H1 (cell line): ENCODE measurements at regions of chr20 and their contacts with region 1.

Region 1: GRCh38 chr20:22691369-22692118 is 107.2 kb upstream of the FOXA2 start:
- DNase-seq: peak; percentile 58 to 84
- H3K4me3 ChIP-seq: no peak overlapping the region
- H3K27ac ChIP-seq: no peak overlapping the region
- H3K4me1 ChIP-seq: peaks cover 0 to 2% (median 0%) of the 10 kb centered on the region in 4 experiments; a peak in 1 of 7 replicates
- H3K27me3 ChIP-seq: no peaks in the 10 kb centered on the region; a peak in 2 of 7 replicates
- CTCF ChIP-seq: peak; percentile 77 to 90 (median 89)
- EP300 ChIP-seq: no peak
- POLR2A ChIP-seq: no peak
- RAD21 ChIP-seq: peak; percentile 92 to 96

Region 2: DNA sequence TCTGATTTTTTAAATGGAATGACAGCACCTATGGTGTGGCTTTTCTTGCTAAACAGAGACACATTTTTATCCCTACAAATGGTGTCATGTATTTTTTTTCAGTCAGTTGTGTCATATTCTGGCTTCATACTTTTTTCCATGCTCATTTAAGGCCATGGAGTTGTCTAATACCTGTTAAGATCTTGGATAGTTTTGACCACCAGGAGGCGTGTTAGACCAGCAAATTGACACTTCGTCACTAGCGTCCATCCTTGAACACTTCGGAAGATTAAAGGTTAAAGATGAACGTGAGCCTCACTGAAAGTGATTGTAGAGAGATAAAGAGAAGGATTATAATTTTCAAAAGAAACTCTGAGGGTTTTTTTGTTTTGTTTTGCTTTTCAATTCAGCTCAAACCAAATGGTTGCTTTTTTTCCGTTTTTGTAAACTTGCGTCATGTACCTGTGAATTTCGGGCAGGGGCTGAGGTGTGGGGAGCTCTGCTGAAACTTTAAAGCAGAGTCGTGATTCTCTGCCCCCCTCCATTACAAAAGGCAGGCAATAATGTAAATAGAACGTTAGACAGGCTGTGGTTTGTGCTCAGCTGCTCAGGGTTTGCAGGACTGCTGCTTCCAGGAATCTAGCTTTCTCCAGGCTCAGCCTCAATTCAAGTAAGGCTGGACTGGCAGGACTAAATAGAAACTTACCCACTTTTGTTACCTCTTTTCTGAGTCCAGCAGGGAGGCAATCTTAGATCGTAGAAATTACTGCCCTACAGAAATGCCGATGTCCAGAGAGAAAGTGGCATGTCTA is 352.3 kb before region 1 on chr20:
- CTCF ChIA-PET with region 1: interaction called, 140 read pairs
- POLR2A ChIA-PET with region 1: no interaction called
- DNase-seq: peak; percentile 17 to 57
- H3K4me3 ChIP-seq: no peak overlapping the region
- H3K27ac ChIP-seq: no peak overlapping the region
- H3K4me1 ChIP-seq: no peaks in the 10 kb centered on the region
- H3K27me3 ChIP-seq: peaks cover 0 to 7% (median 0%) of the 10 kb centered on the region in 4 experiments; a peak in 2 of 7 replicates
- CTCF ChIP-seq: peak in 2 of 3 experiments; percentile 75 to 80; a peak in 3 of 4 replicates
- EP300 ChIP-seq: no peak
- POLR2A ChIP-seq: no peak
- RAD21 ChIP-seq: peak; percentile 96

Region 3: DNA sequence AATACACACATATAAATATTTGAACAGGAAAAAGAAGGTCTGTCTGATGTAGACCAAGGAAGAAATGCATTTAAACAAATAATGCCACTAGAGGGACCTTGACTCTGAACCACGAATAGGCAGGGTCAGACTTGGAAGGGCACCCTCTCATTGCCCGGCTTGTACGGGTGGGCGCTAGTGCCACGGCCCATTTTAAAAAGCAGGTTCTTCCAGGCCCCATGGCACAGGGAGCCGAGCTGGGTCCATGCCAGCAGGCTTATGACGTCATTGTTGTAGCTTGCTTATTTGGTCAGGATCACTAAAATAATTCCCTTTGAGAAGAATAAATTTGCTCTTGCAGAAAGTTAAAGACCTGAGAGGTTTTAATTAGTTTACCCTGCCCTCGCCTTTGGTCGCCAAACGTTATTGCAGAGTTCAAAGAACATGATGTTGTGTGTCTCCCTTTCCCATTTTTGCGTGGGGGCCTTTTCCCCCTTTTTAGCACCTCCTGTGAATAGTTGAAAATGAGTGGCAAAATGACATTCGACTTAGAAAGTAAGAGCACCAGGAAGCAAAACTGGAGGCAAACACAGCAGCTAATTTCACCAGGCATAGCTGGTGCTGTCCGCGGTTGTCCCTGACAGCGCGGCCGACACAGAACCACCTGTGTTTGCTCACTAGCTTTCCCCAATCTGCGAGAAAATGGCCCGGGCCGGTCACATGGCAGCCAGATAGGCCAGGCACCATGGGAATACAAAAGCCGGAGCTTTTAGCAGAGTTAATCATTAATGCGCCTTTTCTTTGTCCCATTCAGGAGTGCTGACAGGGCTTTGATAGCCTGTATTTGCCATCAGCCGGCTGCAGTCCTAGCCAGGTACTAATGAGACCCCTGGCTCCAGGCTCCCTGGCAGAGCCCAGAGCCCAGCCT is 201.0 kb before region 1 on chr20:
- CTCF ChIA-PET with region 1: no interaction called
- POLR2A ChIA-PET with region 1: no interaction called
- DNase-seq: peak in 1 of 2 experiments; percentile 58
- H3K4me3 ChIP-seq: no peak overlapping the region
- H3K27ac ChIP-seq: no peak overlapping the region
- H3K4me1 ChIP-seq: peaks cover 1 to 6% (median 5%) of the 10 kb centered on the region in 4 experiments; a peak in 4 of 7 replicates
- H3K27me3 ChIP-seq: peaks cover 0 to 4% (median 0%) of the 10 kb centered on the region in 4 experiments; a peak in 1 of 7 replicates
- CTCF ChIP-seq: peak in 2 of 3 experiments; percentile 12 to 24; a peak in 2 of 4 replicates
- EP300 ChIP-seq: no peak
- POLR2A ChIP-seq: no peak
- RAD21 ChIP-seq: peak; percentile 15 to 30; a peak in 3 of 4 replicates

Region 4: DNA sequence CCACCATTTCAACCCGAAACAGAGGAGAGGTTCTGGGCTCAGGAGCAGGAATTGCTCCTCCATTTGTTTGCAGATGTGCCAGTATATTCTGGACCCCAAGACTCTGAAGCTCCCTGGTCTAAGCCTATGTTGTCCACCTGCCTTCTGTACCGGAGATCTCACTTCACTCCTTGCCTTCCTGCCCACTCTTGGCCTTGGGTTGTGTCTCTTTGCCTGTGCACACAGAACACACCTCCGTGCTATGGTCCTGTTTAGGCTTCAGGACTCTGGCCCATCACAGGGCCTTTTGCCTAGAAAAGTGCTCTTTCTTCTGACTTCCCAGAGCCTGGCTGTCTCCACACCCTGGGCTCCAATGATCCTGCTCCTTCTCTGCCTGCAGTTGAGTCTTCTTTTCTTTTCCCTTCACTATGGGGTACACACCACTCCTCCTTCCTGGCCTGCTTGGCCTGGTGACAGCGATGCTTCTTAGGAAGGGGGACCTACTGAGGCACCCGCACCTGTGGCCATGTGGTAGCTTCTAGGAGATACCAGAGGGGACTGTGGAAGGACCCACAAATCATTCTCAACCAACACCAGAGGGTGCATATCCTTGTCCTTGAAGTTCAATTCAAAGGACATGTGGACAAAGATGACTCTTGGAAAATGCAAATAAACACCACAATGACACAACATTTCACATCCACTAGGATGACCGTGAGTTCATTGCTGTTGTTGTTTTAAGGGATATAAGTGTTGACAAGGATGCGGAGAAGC is 182.3 kb before region 1 on chr20:
- CTCF ChIA-PET with region 1: no interaction called
- POLR2A ChIA-PET with region 1: no interaction called
- DNase-seq: no peak
- H3K4me3 ChIP-seq: no peak overlapping the region
- H3K27ac ChIP-seq: no peak overlapping the region
- H3K4me1 ChIP-seq: no peaks in the 10 kb centered on the region; a peak in 1 of 7 replicates
- H3K27me3 ChIP-seq: no peaks in the 10 kb centered on the region
- CTCF ChIP-seq: no peak
- EP300 ChIP-seq: no peak
- POLR2A ChIP-seq: no peak
- RAD21 ChIP-seq: no peak

Region 5: DNA sequence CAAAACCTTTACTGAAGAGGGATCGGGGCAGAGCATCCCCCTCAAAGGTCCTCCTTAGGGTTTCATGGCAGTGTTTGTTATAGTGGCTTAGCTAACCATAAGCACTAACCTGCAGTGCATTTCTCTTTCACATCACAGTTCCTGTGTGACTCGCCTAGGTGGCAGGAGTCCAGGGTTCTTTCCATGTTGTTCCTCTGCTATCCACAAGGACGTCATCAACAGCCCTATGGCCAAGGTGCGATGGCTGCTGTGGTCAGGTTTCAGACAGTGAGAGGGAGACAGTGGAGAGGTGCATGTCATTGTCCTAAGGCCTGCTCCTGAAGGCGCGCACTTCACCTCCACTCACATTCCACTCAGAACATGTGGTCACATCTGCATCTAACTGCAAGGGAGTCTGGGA is 68.3 kb before region 1 on chr20:
- CTCF ChIA-PET with region 1: no interaction called
- POLR2A ChIA-PET with region 1: no interaction called
- DNase-seq: no peak
- H3K4me3 ChIP-seq: no peak overlapping the region
- H3K27ac ChIP-seq: no peak overlapping the region
- H3K4me1 ChIP-seq: peaks cover 0 to 9% (median 6%) of the 10 kb centered on the region in 4 experiments; a peak in 4 of 7 replicates
- H3K27me3 ChIP-seq: peaks cover 0 to 10% (median 7%) of the 10 kb centered on the region in 4 experiments; a peak in 3 of 7 replicates
- CTCF ChIP-seq: peak; percentile 39 to 74 (median 63)
- EP300 ChIP-seq: no peak
- POLR2A ChIP-seq: no peak
- RAD21 ChIP-seq: no peak

Region 6: GRCh38 chr20:22779878-22780277 is 88.3 kb after region 1 on chr20:
- CTCF ChIA-PET with region 1: no interaction called
- POLR2A ChIA-PET with region 1: no interaction called
- DNase-seq: no peak
- H3K4me3 ChIP-seq: no peak overlapping the region
- H3K27ac ChIP-seq: no peak overlapping the region
- H3K4me1 ChIP-seq: no peaks in the 10 kb centered on the region
- H3K27me3 ChIP-seq: no peaks in the 10 kb centered on the region
- CTCF ChIP-seq: no peak
- EP300 ChIP-seq: no peak
- POLR2A ChIP-seq: no peak
- RAD21 ChIP-seq: no peak

Region 7: GRCh38 chr20:22846863-22847262 is 155.3 kb after region 1 on chr20:
- CTCF ChIA-PET with region 1: interaction called, 12 read pairs
- POLR2A ChIA-PET with region 1: no interaction called
- DNase-seq: no peak
- H3K4me3 ChIP-seq: no peak overlapping the region
- H3K27ac ChIP-seq: no peak overlapping the region
- H3K4me1 ChIP-seq: no peaks in the 10 kb centered on the region
- H3K27me3 ChIP-seq: no peaks in the 10 kb centered on the region
- CTCF ChIP-seq: no peak
- EP300 ChIP-seq: no peak
- POLR2A ChIP-seq: no peak
- RAD21 ChIP-seq: no peak

Region 8: GRCh38 chr20:22974353-22974752 is 282.8 kb after region 1 on chr20:
- CTCF ChIA-PET with region 1: interaction called, 44 read pairs
- POLR2A ChIA-PET with region 1: no interaction called
- DNase-seq: peak in 1 of 2 experiments; percentile 54
- H3K4me3 ChIP-seq: no peak overlapping the region
- H3K27ac ChIP-seq: no peak overlapping the region
- H3K4me1 ChIP-seq: no peaks in the 10 kb centered on the region
- H3K27me3 ChIP-seq: no peaks in the 10 kb centered on the region; a peak in 1 of 7 replicates
- CTCF ChIP-seq: peak; percentile 51 to 69 (median 59)
- EP300 ChIP-seq: no peak
- POLR2A ChIP-seq: no peak
- RAD21 ChIP-seq: peak; percentile 58 to 70

Region 9: DNA sequence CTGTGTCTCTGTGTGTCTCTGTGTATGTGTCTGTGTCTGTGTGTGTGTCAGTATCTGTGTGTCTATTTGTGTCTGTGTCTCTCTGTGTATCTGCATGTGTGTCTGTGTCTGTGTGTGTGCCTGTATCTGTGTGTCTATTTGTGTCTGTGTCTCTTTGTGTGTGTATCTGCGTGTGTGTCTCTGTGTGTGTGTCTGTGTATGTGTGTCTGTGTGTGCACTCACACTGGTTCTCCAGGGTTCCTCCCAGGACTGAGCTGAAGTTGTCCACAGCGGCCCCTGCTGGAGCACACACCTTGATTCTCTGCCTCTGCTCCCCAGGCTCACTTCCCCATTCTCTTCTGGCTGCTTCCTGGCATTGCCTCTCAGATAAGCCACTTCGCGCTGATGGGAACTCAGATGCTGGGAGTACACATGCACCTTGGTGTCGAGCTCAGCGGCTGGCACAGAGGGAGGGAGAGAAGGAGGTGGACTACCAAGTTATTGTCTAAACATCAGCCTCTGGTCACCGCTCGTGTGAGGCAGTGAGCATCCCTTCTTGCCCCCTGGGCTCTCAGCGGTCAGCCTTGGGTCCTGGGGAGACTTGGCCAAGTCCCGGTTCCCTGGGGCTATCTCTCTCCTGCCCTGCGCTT is 554.1 kb after region 1 on chr20:
- CTCF ChIA-PET with region 1: interaction called, 10 read pairs
- POLR2A ChIA-PET with region 1: no interaction called
- DNase-seq: peak in 1 of 2 experiments; percentile 66
- H3K4me3 ChIP-seq: no peak overlapping the region
- H3K27ac ChIP-seq: no peak overlapping the region
- H3K4me1 ChIP-seq: no peaks in the 10 kb centered on the region
- H3K27me3 ChIP-seq: no peaks in the 10 kb centered on the region
- CTCF ChIP-seq: peak; percentile 59 to 86 (median 83)
- EP300 ChIP-seq: no peak
- POLR2A ChIP-seq: no peak
- RAD21 ChIP-seq: peak; percentile 47 to 62